Activated B cell treated with CpG ODN at 0.5 μM for 24 hours (primary cell): ENCODE measurements at regions of chr22 and their contacts with region 1.

Region 1: DNA sequence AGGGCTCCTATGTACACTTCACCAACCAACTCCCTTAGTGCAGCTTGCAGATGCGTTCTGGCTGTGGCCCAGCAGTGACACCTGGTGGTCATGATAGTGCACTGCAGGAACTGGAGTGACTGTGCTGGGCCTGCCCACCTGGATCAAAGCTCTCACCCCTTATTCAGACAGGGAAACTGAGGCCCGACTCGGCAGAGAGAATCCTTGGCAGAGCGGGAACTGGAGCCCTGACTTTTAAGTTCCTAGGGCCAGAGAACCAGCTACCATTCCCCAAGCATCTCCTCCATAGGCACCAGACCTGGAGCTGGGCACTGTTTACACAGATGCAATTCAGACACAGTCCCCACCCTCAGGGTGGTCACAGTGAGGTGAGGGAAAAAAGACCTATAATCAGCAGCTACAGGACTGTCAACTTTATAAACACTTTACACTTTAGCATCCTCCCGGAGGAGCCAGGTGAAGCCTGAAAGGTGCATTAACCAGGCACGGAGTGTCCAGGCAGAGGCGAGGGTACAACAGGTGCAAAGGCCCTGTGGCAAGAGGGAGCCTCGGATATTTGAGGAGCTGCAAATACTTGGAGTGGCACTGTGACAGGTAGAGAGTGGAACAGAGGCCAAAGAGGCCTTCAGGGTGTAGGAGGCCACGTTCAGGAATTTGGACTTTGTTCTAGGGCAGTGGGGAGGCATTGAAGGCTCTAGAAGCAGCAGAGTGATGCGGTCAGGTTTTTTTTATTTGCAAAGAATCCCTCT is 22.0 kb downstream of the RHBDD3 start:
- DNase-seq: peak; percentile 56
- ATAC-seq: peak; percentile 99
- H3K4me3 Mint-ChIP-seq: no peak overlapping the region
- H3K27ac Mint-ChIP-seq: no peak overlapping the region
- H3K4me1 Mint-ChIP-seq: no peaks in the 10 kb centered on the region
- H3K27me3 Mint-ChIP-seq: peaks cover 20% of the 10 kb centered on the region
- CTCF ChIP-seq: peak; percentile 88

Region 2: DNA sequence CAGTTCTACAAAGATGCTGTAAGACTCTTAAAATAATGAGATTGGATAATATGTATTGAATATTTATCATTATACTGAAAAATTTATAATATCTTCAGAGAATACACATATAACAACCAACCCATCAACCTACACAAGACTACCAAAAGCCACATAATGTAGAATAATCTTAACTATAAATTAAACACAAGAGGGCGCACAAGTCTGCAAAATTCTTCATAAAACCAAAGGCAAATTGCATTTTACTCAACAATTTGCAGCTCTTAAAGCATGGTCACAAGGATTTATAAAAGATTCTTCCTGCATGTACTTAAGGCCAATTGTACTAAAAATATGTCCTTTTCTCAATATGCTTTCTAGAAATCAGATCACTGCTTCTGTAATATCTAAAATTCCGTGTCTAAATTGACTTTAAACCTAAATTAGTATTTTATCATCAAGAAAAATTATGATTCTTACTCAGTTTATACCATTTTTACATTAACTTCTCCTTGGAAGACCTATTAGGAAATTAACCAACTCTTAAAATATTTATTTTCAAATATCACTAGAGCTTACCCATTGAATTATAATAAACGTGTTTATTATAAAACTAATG is 645.2 kb before region 1 on chr22:
- CTCF ChIA-PET with region 1: interaction called, 14 read pairs
- POLR2A ChIA-PET with region 1: no interaction called
- intact Hi-C with region 1: loop called (anchors 2 kb)
- DNase-seq: no peak
- ATAC-seq: no peak
- H3K4me3 Mint-ChIP-seq: no peak overlapping the region
- H3K27ac Mint-ChIP-seq: no peak overlapping the region
- H3K4me1 Mint-ChIP-seq: no peaks in the 10 kb centered on the region
- H3K27me3 Mint-ChIP-seq: peaks cover 5% of the 10 kb centered on the region
- CTCF ChIP-seq: peak; percentile 34

Region 3: GRCh38 chr22:29040385-29041275 is 205.2 kb before region 1 on chr22:
- CTCF ChIA-PET with region 1: interaction called, 45 read pairs
- POLR2A ChIA-PET with region 1: no interaction called
- intact Hi-C with region 1: loop called (anchors 1 kb)
- DNase-seq: no peak
- ATAC-seq: peak; percentile 61
- H3K4me3 Mint-ChIP-seq: no peak overlapping the region
- H3K27ac Mint-ChIP-seq: no peak overlapping the region
- H3K4me1 Mint-ChIP-seq: no peaks in the 10 kb centered on the region
- H3K27me3 Mint-ChIP-seq: peaks cover 3% of the 10 kb centered on the region
- CTCF ChIP-seq: no peak

Region 4: GRCh38 chr22:29112102-29112501 is 133.7 kb before region 1 on chr22:
- CTCF ChIA-PET with region 1: interaction called, 11 read pairs
- POLR2A ChIA-PET with region 1: no interaction called
- intact Hi-C with region 1: loop called (anchors 2 kb)
- DNase-seq: no peak
- ATAC-seq: no peak
- H3K4me3 Mint-ChIP-seq: no peak overlapping the region
- H3K27ac Mint-ChIP-seq: no peak overlapping the region
- H3K4me1 Mint-ChIP-seq: no peaks in the 10 kb centered on the region
- H3K27me3 Mint-ChIP-seq: peaks cover 38% of the 10 kb centered on the region
- CTCF ChIP-seq: no peak

Region 5: GRCh38 chr22:29167032-29167911 is 78.5 kb before region 1 on chr22:
- CTCF ChIA-PET with region 1: interaction called, 3 read pairs
- POLR2A ChIA-PET with region 1: no interaction called
- intact Hi-C with region 1: loop called (anchors 2 kb)
- DNase-seq: peak; percentile 69
- ATAC-seq: peak; percentile 94
- H3K4me3 Mint-ChIP-seq: peak overlapping the region; percentile 73
- H3K27ac Mint-ChIP-seq: peak overlapping the region; percentile 87
- H3K4me1 Mint-ChIP-seq: peaks cover 35% of the 10 kb centered on the region
- H3K27me3 Mint-ChIP-seq: peaks cover 41% of the 10 kb centered on the region
- CTCF ChIP-seq: no peak

Region 6: GRCh38 chr22:29267858-29268417 is 22.1 kb after region 1 on chr22 and contains the starts of genes EWSR1 and RHBDD3:
- CTCF ChIA-PET with region 1: interaction called, 4 read pairs
- POLR2A ChIA-PET with region 1: no interaction called
- intact Hi-C with region 1: loop called (anchors 1 kb)
- DNase-seq: peak; percentile 99
- ATAC-seq: peak; percentile 86
- H3K4me3 Mint-ChIP-seq: peak within 1 kb of the TSS; percentile 96
- H3K27ac Mint-ChIP-seq: peak within 1 kb of the TSS; percentile 100
- H3K4me1 Mint-ChIP-seq: peaks cover 58% of the 10 kb centered on the region
- H3K27me3 Mint-ChIP-seq: no peaks in the 10 kb centered on the region
- CTCF ChIP-seq: no peak
- total RNA-seq, gene EWSR1: 347 and 382 TPM in 2 replicates
- total RNA-seq, gene RHBDD3: 17.7 and 17.9 TPM in 2 replicates